ENCODE measurements at regions of chr12 and their contacts with region 1.

Region 1: GRCh38 chr12:3803865-3804472 is 51.1 kb upstream of the CRACR2A start:
- DNase-seq: peak; percentile 52 to 64
- H3K4me3 ChIP-seq: no peak overlapping the region
- H3K27ac ChIP-seq: no peak overlapping the region
- H3K4me1 ChIP-seq: no peaks in the 10 kb centered on the region
- H3K27me3 ChIP-seq: peaks cover 53% of the 10 kb centered on the region
- CTCF ChIP-seq: peak; percentile 94

Region 2: GRCh38 chr12:3326850-3327780 is 476.9 kb before region 1 on chr12:
- CTCF ChIA-PET with region 1: interaction called, 10 read pairs
- POLR2A ChIA-PET with region 1: no interaction called
- intact Hi-C with region 1: no loop called
- DNase-seq: no peak
- H3K4me3 ChIP-seq: no peak overlapping the region
- H3K27ac ChIP-seq: no peak overlapping the region
- H3K4me1 ChIP-seq: no peaks in the 10 kb centered on the region
- H3K27me3 ChIP-seq: peaks cover 95% of the 10 kb centered on the region
- CTCF ChIP-seq: no peak

Region 3: DNA sequence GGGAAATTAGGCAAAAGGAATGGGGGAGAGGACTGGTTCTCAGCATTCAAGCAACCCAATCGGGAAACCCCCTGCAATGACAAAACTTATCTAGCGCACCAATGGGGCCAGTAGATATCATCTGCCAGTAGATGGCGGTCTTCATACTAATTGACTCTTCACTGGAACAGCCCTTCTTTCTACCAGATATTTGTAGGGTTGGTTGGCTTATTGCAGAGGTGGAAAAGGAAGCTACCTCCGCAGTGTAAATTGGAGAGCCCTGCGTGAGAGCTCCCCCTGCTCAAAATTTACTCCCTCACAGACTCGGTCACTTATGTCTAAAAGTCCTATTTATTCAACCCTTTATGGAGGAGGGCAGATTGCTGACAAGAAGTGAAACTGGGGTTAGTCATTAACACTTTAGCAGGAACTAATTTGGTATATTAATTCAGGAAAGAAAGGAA is 303.5 kb after region 1 on chr12:
- CTCF ChIA-PET with region 1: no interaction called
- POLR2A ChIA-PET with region 1: no interaction called
- intact Hi-C with region 1: no loop called
- DNase-seq: no peak
- H3K4me3 ChIP-seq: no peak overlapping the region
- H3K27ac ChIP-seq: no peak overlapping the region
- H3K4me1 ChIP-seq: no peaks in the 10 kb centered on the region
- H3K27me3 ChIP-seq: peaks cover 64% of the 10 kb centered on the region
- CTCF ChIP-seq: peak; percentile 54

Measured in PC-9 (cell line).